ENCODE measurements at regions of chr22 and their contacts with region 1.

Region 1: GRCh38 chr22:31272522-31273446 is 19.5 kb downstream of the PIK3IP1 start:
- DNase-seq: peak; percentile 68
- CTCF ChIP-seq: peak; percentile 71

Region 2: GRCh38 chr22:31107178-31107893 is 165.4 kb before region 1 on chr22 and contains the start of gene SELENOM:
- CTCF ChIA-PET with region 1: interaction called, 16 read pairs
- POLR2A ChIA-PET with region 1: no interaction called
- DNase-seq: peak; percentile 96
- CTCF ChIP-seq: peak; percentile 71

Region 3: DNA sequence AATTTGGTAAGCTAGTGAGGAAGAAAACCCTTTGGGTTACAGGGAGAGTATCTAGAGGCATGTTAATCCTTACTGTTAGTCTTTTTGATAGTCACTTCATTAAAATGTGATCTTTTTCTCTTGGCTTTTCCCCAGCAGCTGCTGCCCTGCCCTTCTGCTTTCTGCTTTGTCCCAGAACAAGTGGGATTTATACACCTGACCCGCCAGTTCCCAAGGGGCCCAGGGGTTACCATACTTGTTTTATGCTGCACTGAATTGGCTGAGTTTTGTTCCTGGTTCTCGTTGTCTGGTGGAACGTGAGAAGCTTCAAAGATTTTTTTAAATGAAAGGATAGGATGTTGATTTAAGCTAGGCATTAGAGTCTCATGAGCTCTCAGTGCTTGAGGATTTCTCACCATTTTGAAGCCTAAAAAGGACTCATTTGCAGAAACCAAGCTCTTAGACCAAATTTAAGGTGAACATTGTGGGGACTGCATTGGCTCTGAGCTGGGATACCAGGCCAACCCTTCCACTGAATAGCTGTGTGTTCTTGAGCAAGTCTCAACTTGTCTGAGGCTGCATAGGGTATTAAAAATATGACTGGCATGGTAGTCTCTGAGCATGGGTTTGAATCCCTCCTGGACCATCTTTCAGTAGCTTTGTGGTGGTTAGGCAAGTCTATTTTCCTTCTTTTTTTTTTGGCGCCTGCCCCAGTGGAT is 54.1 kb before region 1 on chr22:
- CTCF ChIA-PET with region 1: interaction called, 71 read pairs
- POLR2A ChIA-PET with region 1: no interaction called
- DNase-seq: no peak
- CTCF ChIP-seq: no peak

Region 4: DNA sequence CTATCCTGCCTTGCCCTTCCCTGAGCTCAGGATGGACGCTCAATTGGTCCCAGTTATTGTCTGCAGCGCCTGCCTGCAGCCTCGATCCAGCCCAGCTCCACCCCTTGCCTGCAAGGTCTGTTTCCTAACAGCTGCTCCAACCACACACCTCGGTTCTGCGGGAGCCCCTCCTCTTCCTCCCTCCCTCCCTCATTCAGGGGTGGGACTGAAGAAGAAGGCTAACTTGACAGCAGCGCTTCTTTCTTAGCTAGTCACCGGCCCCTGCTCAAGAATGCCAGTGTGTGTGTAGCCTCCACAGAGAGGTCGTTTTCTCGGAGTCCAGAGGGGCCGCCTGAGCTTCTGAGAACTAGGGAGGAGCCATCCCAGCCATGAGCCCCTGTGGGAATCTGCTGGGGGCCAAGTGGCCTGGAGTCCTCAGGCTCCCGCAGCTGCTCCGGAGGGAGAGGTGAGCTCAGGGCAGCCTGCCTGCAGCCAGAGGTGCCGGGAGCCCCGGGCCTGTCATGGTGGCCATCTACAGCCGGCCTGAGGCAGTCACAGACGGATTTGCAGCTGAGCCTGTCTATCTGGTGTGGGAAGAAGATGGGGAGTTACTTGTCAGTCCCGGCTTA is 24.5 kb before region 1 on chr22:
- CTCF ChIA-PET with region 1: interaction called, 156 read pairs
- POLR2A ChIA-PET with region 1: no interaction called
- DNase-seq: peak; percentile 63
- CTCF ChIP-seq: no peak

Region 5: DNA sequence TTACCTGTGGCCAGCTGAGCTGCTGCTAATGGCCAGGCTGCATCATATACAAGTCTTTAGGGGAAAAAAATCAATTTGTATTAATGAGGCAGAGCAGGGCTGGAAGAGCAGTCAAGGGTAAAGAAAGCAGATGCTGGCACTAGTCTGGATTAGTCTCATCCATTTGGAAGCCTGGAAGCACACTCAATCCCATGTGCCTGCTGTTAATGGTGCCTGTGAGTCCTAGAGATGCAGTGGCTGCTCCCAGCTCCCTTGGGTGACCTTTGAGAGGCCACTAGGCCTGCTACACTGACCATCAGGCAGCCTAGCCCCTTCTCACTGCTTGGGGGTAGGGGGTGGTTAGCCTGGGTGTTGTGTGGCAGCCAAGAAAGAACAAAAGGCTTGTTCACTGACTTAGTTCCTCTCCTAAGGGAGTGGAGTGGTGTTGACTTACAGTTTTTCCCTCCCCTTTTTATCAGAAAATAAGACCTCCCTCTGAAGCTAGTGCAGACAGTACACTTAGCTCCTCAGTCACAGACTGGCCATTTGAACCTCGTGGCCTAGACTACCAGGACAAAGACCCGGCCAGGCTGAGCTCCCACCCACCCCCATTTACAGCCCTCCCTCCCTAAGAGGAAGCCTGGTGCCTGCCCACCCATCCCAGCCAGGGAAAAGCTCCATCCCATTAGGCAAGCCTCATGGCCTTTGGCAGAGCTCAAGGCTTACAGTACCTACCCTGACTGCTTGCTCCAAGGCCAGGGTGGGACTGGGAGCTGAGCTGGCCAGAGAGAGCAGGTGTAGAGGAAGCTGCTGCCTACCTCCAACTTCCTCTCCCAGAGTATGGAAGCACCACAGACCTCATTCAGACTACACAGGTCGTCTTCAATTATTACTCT is 11.7 kb after region 1 on chr22:
- CTCF ChIA-PET with region 1: interaction called, 21 read pairs
- POLR2A ChIA-PET with region 1: interaction called, 4 read pairs
- DNase-seq: no peak
- CTCF ChIP-seq: no peak

Region 6: DNA sequence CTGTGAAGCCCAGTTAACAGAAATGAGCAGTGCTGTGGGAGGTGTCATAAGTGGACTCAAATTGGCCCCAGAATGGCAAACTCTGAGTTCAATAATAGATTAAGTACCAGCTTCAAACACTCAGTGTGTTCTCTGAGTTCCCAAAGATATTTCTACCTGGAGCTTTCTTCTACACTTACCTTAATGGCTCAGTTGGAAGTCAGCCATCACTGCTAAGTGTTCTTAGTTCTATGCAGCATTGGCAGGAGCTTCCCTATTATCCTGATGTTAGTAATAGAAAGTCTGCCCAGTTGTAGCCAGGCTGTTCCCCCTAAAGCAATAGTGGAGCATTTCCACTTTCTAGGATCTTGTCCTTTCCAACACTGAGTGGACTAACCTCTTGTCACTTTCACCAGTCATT is 29.2 kb after region 1 on chr22:
- CTCF ChIA-PET with region 1: interaction called, 21 read pairs
- POLR2A ChIA-PET with region 1: no interaction called
- DNase-seq: no peak
- CTCF ChIP-seq: no peak

Region 7: DNA sequence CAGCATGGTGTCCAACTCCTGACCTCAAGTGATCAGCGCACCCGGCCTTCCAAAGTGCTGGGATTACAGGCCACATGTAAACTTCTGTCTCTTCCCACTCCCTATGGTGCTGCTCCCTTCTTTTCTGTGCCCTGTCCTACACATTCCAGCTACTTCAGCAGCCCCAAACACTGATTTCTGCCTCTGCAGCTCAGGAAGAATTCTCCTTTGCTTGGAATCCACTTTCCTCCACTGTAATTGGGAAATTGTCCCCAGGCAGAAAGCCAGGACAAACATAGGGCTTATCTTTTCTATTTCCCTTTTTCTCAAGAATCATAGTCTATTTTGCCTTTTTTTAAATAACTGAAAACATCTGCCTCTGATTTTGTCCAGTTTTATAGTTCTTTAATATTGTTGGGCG is 105.3 kb after region 1 on chr22:
- CTCF ChIA-PET with region 1: no interaction called
- POLR2A ChIA-PET with region 1: no interaction called
- DNase-seq: no peak
- CTCF ChIP-seq: no peak

Region 8: DNA sequence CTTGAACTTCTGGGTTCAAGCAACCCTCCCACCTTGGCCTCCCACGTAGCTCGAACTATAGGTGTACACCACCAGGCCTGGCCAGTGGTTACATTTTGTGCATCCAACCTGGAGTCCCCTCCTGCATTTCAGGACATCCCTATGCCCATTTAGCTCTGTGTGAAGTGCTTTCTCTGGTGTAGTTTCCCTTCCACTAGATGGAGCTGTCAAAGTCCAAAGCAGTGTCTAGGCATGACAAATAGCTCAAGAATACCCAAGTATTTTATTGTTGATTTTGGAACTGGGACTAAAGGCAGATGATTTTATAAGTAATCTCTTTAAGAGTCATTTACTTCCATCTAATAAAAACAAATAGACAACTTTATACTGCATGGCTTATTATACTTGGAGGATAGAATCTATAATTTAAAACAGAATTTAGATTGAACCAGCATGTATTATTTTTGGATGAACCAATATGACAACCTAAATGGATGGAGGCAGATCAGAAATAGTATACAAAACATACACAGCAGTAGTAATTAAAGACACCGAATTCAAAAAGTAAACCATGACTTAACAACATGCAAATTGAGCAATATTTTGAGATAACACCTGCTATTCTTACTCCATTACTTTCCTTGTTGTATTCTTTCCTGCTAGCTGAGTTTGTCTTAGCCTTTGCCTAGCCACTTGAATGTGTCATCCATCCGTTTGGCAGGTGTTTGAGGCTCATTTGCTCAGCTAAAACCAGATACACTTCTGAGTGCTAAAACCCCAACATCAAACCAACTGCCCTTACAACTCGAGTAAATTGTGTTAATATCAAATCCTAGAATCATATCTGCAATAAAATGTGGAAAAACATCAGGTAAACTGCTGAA is 179.2 kb after region 1 on chr22:
- CTCF ChIA-PET with region 1: no interaction called
- POLR2A ChIA-PET with region 1: no interaction called
- DNase-seq: peak; percentile 44
- CTCF ChIP-seq: peak; percentile 56